PC-3 (cell line): ENCODE measurements at regions of chr11 and their contacts with region 1.

Region 1: GRCh38 chr11:48109046-48109666 is 107.5 kb upstream of the OR4B1 start:
- DNase-seq: peak; percentile 69
- ATAC-seq: peak; percentile 69
- H3K4me3 ChIP-seq: peak overlapping the region; percentile 52; the same call in 1 of the 2 replicates
- H3K27ac ChIP-seq: peak overlapping the region; percentile 72
- H3K4me1 ChIP-seq: peaks cover 24% of the 10 kb centered on the region
- H3K27me3 ChIP-seq: no peaks in the 10 kb centered on the region
- CTCF ChIP-seq: peak; percentile 34

Region 2: GRCh38 chr11:47858169-47858543 is 251.0 kb before region 1 on chr11:
- CTCF ChIA-PET with region 1: no interaction called
- POLR2A ChIA-PET with region 1: interaction called, 6 read pairs
- intact Hi-C with region 1: loop called (anchors 5 kb)
- DNase-seq: peak; percentile 61
- ATAC-seq: peak; percentile 95
- H3K4me3 ChIP-seq: no peak overlapping the region
- H3K27ac ChIP-seq: peak overlapping the region; percentile 40
- H3K4me1 ChIP-seq: peaks cover 10% of the 10 kb centered on the region
- H3K27me3 ChIP-seq: no peaks in the 10 kb centered on the region
- CTCF ChIP-seq: no peak

Region 3: DNA sequence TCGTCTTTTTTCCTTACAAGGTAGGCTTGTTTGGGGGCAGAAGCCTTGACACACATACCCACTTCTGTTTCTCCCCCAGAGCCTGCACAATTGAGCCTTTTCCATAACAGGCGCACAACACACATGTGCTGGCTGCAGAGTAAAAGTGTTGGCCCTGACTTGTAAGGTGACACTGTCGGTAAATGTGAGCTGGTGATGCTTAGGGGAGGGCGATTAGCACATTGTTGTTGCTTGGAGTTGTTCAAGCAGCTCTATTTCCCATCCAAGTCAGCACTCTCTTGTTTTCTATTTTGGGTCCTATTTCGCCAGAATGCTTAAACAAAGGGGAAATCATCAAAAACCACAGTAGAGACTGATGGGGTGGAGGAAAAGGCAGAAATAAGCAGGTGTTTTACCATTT is 180.7 kb before region 1 on chr11:
- CTCF ChIA-PET with region 1: interaction called, 19 read pairs
- POLR2A ChIA-PET with region 1: no interaction called
- intact Hi-C with region 1: no loop called
- DNase-seq: no peak
- ATAC-seq: no peak
- H3K4me3 ChIP-seq: no peak overlapping the region
- H3K27ac ChIP-seq: no peak overlapping the region
- H3K4me1 ChIP-seq: peaks cover 10% of the 10 kb centered on the region
- H3K27me3 ChIP-seq: no peaks in the 10 kb centered on the region
- CTCF ChIP-seq: no peak

Region 4: GRCh38 chr11:47946682-47947575 is 162.2 kb before region 1 on chr11:
- CTCF ChIA-PET with region 1: interaction called, 3 read pairs
- POLR2A ChIA-PET with region 1: no interaction called
- intact Hi-C with region 1: loop called (anchors 1 kb)
- DNase-seq: peak; percentile 98
- ATAC-seq: peak; percentile 96
- H3K4me3 ChIP-seq: peak overlapping the region; percentile 44; the same call in 1 of the 2 replicates
- H3K27ac ChIP-seq: peak overlapping the region; percentile 97
- H3K4me1 ChIP-seq: peaks cover 38% of the 10 kb centered on the region
- H3K27me3 ChIP-seq: no peaks in the 10 kb centered on the region
- CTCF ChIP-seq: no peak

Region 5: DNA sequence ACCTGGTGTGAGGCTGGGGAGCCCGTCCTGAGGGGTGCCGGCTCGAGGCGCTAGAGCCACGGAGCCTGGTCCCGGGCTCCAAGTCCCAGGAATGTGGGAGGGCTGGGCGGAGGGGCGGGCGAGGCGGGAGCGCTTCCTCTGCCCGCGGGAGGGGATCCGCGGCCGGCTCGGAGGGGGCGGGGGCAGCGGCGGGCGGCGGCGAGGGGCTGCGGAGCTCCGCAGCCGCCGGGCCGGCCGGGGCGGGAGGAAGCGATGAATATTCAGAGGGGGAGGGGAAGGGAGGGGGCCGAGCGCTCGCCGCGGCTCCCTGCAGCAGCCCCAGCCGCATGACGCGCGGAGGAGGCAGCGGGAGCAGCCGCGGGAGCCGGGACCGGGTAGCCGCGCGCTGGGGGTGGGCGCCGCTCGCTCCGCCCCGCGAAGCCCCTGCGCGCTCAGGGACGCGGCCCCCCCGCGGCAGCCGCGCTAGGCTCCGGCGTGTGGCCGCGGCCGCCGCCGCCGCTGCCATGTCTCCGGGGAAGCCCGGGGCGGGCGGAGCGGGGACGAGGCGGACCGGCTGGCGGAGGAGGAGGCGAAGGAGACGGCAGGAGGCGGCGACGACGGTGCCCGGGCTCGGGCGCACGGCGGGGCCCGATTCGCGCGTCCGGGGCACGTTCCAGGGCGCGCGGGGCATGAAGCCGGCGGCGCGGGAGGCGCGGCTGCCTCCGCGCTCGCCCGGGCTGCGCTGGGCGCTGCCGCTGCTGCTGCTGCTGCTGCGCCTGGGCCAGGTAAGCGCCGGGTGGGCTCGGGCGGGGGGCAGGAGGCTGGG is 128.7 kb before region 1 on chr11 and contains the start of gene PTPRJ:
- CTCF ChIA-PET with region 1: interaction called, 3 read pairs
- POLR2A ChIA-PET with region 1: no interaction called
- intact Hi-C with region 1: loop called (anchors 2 kb)
- DNase-seq: peak; percentile 49
- ATAC-seq: peak; percentile 49
- H3K4me3 ChIP-seq: peak within 1 kb of the TSS; percentile 86
- H3K27ac ChIP-seq: no peak within 1 kb of the TSS
- H3K4me1 ChIP-seq: peaks cover 26% of the 10 kb centered on the region
- H3K27me3 ChIP-seq: no peaks in the 10 kb centered on the region
- CTCF ChIP-seq: no peak
- total RNA-seq, gene PTPRJ: 10.5 and 12.8 TPM in 2 replicates

Region 6: GRCh38 chr11:48093795-48094642 is 15.1 kb before region 1 on chr11:
- CTCF ChIA-PET with region 1: interaction called, 4 read pairs
- POLR2A ChIA-PET with region 1: no interaction called
- intact Hi-C with region 1: loop called (anchors 2 kb)
- DNase-seq: peak; percentile 56
- ATAC-seq: peak; percentile 49
- H3K4me3 ChIP-seq: peak overlapping the region; percentile 45
- H3K27ac ChIP-seq: peak overlapping the region; percentile 93
- H3K4me1 ChIP-seq: peaks cover 60% of the 10 kb centered on the region
- H3K27me3 ChIP-seq: no peaks in the 10 kb centered on the region
- CTCF ChIP-seq: no peak

Region 7: DNA sequence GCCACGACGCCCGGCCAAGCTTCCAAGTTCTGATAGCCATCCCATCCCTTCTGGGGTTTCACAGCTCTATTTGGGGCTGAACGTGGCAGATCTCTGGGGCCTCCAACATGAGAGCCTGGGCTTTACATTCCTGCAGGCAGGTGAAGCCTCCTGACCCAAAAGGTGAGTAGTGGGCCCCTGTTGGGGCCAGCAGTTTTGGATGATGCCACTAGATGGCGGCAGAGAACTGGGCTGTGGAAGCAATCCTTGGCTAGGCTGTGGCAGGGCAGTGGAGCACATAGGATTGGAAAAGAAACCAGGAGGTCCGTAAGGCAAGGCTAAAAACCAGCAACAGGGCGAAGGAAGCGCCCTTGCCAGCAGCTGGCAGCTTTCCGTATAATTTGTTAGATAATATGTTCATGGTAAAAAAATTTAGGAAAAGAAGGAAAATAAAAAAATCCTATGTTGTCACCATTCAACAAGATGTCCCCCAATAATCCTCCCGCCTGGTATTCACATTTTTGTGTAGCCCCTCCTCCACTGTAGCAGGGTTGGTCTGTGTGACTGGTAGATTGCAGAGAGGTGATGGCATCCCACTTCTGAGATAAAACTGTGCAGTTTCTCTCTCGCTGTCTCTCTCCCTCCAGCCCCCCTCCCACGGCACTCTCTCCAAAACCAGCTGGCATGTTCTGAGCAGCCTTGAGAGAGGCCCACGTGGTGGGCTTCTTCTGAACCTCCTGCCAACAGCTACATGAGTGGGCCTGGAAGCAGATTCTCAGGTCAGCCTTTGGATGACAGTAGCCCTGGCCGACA is 63.9 kb after region 1 on chr11:
- CTCF ChIA-PET with region 1: no interaction called
- POLR2A ChIA-PET with region 1: no interaction called
- intact Hi-C with region 1: no loop called
- DNase-seq: peak; percentile 74
- ATAC-seq: peak; percentile 88
- H3K4me3 ChIP-seq: no peak overlapping the region
- H3K27ac ChIP-seq: no peak overlapping the region
- H3K4me1 ChIP-seq: no peaks in the 10 kb centered on the region
- H3K27me3 ChIP-seq: no peaks in the 10 kb centered on the region
- CTCF ChIP-seq: peak; percentile 87